Activated T-helper 2 cell treated with anti-CD3 and anti-CD28 coated beads, Interferon-gamma antibody, Interleukin-2, Interleukin-4, amounts not matched to agents 10 μg/mL and 5 μg/mL and 100 μg/mL, durations not matched to agents 14 hours and 24 hours and 36 hours (primary cell): ENCODE measurements at regions of chr12 and their contacts with region 1.

Region 1: GRCh38 chr12:28223025-28223554 is 32.8 kb downstream of the CCDC91 start:
- DNase-seq: no peak
- H3K4me3 Mint-ChIP-seq: no peak overlapping the region
- H3K27ac Mint-ChIP-seq: peak overlapping the region; percentile 43
- H3K4me1 Mint-ChIP-seq: peaks cover 32% of the 10 kb centered on the region
- H3K27me3 Mint-ChIP-seq: peaks cover 29% of the 10 kb centered on the region

Region 2: GRCh38 chr12:28190321-28191050 is 32.6 kb before region 1 on chr12 and contains the start of gene CCDC91:
- intact Hi-C with region 1: loop called (anchors 1 kb)
- DNase-seq: peak; percentile 77
- H3K4me3 Mint-ChIP-seq: peak within 1 kb of the TSS; percentile 91
- H3K27ac Mint-ChIP-seq: peak within 1 kb of the TSS; percentile 96
- H3K4me1 Mint-ChIP-seq: peaks cover 30% of the 10 kb centered on the region
- H3K27me3 Mint-ChIP-seq: no peaks in the 10 kb centered on the region
- total RNA-seq, gene CCDC91: 13.1 and 13.7 TPM in 2 replicates

Region 3: GRCh38 chr12:28278499-28278898 is 55.4 kb after region 1 on chr12:
- intact Hi-C with region 1: no loop called
- DNase-seq: no peak
- H3K4me3 Mint-ChIP-seq: no peak overlapping the region
- H3K27ac Mint-ChIP-seq: no peak overlapping the region
- H3K4me1 Mint-ChIP-seq: no peaks in the 10 kb centered on the region
- H3K27me3 Mint-ChIP-seq: no peaks in the 10 kb centered on the region